ENCODE measurements at regions of chr3 and their contacts with region 1.

Region 1: GRCh38 chr3:140770988-140771667 is 93.3 kb downstream of the TRIM42 start:
- DNase-seq: peak in 2 of 14 experiments; percentile 9 to 24
- ATAC-seq: no peak
- H3K4me3 ChIP-seq: no peak overlapping the region
- H3K4me3 Mint-ChIP-seq: no peak overlapping the region
- H3K27ac ChIP-seq: no peak overlapping the region
- H3K27ac Mint-ChIP-seq: no peak overlapping the region
- H3K4me1 ChIP-seq: no peaks in the 10 kb centered on the region
- H3K4me1 Mint-ChIP-seq: no peaks in the 10 kb centered on the region
- H3K27me3 ChIP-seq: no peaks in the 10 kb centered on the region
- H3K27me3 Mint-ChIP-seq: no peaks in the 10 kb centered on the region
- CTCF ChIP-seq: no peak

Region 2: DNA sequence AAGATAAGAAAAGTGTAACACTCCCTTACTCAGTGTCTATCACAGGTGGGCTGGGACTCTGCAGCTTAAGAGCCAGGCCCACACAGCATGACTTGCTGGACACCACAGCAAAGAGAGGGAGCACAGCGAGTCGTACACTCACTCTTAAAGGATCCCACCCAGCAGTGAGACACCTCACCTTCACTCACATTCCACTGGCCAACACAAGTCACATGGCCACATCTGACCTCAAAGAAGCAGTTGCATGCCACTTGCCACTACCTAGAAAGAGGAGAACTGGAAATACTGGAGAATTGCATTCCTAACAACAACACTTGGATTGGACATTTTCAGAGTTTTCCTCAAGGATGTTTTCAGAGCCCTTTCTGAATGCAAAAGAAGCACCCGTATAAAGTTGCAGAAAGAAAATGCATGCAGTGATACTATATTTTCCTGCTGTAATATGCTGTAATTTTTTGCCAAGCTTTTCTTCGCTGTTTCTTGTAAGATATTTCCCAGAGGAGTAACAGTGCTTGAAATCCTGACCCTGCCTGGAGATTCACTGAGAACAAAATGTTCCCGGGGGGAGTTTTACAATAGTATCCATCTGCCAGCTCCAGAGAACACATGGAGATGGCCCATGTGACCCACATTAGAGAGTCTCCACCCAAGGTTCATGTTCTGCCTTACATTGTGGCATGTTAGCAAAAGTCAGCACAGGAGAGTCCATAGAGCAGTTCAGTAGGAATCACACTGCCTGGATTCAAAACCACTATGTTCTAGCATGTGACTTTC is 51.1 kb before region 1 on chr3:
- CTCF ChIA-PET with region 1: no interaction called
- POLR2A ChIA-PET with region 1: no interaction called
- intact Hi-C with region 1: loop called in 1 of 2 experiments (anchors 10 kb)
- DNase-seq: no peak
- ATAC-seq: no peak
- H3K4me3 ChIP-seq: no peak overlapping the region
- H3K4me3 Mint-ChIP-seq: no peak overlapping the region
- H3K27ac ChIP-seq: no peak overlapping the region
- H3K27ac Mint-ChIP-seq: no peak overlapping the region
- H3K4me1 ChIP-seq: no peaks in the 10 kb centered on the region
- H3K4me1 Mint-ChIP-seq: no peaks in the 10 kb centered on the region
- H3K27me3 ChIP-seq: no peaks in the 10 kb centered on the region
- H3K27me3 Mint-ChIP-seq: no peaks in the 10 kb centered on the region
- CTCF ChIP-seq: no peak

Measured in CD4-positive, alpha-beta T cell (primary cell).